CD4-positive, alpha-beta memory T cell (primary cell): ENCODE measurements at regions of chr16 and their contacts with region 1.

Region 1: DNA sequence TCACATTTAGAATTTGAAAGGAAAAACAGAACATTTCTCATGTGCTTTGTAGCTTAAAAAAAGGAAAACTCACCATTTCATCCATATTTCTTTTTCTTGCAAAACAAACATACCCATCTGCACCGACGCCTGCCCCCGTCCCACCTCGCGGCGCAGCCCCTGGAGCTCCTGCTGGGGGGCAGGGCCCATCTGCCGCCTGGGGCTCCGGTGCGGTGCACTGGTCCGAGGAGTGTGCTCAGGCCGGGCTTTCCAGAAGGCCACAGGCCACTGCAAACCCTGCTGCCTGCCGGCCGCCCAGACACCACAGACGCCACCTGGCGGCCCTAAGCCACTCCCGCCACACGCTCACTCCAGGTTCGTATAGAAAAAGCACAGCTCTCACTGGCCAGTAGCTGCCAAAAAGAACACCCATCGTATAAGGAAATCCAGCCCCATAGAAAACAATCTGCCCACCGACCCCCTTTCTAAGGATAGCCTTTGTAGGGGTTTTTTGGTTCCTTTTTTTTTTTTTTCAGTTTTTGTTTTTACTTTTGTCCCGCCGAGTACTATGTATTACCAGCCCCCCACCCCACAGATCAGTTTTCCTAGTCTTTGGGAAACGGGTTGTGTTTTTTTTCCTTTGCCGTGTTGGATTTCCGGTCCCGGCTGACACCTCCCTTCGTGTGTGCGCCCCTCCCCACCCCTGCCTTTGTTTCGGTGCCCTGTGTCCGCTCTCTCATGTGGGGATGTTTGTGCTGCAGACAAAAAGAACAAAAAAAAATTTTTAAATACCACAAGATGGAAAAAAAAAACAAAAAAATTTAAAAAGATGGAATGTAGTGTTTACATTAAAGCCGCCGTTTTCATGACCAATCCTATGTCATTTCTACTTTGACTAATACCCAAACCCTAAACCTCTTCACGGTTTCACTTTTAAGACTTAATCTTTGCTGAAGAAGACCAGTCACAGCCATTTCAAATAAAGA is 68.8 kb downstream of the AMFR start:
- DNase-seq: peak in 4 of 5 donors; percentile 43 to 50 (median 46)
- H3K4me3 ChIP-seq: peak overlapping the region; percentile 20 to 74
- H3K4me3 Mint-ChIP-seq: peak overlapping the region; percentile 85 to 94 (median 92)
- H3K27ac ChIP-seq: peak overlapping the region; percentile 54
- H3K27ac Mint-ChIP-seq: peak overlapping the region; percentile 83 to 96 (median 91)
- H3K4me1 ChIP-seq: peaks cover 18% of the 10 kb centered on the region
- H3K4me1 Mint-ChIP-seq: peaks cover 6 to 37% (median 16%) of the 10 kb centered on the region in 4 donors
- H3K27me3 ChIP-seq: no peaks in the 10 kb centered on the region
- H3K27me3 Mint-ChIP-seq: no peaks in the 10 kb centered on the region

Region 2: DNA sequence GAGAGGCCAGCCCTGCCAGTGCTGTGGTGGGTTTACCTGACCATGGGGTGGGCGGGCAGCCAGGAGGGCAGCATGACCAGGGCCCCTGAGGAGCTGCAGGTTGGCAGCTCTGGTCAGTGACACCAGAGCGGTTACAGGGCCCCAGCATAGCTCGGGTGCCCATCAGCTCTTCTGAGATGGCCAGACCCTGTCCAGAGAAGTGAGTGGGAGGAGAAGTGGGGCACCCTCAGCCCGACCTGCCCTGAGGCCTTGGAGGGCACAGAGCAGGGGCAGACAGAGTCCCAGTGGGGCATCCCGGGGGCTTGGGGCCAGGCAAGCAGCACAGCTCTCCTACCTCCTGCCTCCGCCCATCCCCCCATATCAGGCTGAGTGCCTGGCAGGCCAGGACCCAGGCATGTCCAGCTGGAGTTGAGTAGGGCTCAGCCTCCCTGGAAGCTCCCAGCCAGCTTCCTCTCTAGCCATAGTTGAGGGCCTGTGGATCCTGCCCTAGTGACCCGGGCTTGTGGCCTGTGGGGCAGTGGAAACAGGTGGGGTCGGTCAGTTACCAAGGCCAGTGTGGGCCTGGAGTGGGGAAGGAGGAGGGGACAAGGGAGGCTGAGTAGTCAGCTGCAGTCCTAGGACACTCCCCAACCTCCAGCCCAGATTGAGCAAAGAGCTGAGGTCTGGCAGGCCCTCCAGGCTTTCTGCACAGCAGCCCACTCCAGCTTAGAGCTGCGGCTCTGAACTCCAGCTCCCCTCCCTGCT is 14.7 kb before region 1 on chr16:
- CTCF ChIA-PET with region 1: interaction called, 11 read pairs
- POLR2A ChIA-PET with region 1: no interaction called
- intact Hi-C with region 1: no loop called
- DNase-seq: no peak
- H3K4me3 ChIP-seq: no peak overlapping the region
- H3K4me3 Mint-ChIP-seq: no peak overlapping the region
- H3K27ac ChIP-seq: no peak overlapping the region
- H3K27ac Mint-ChIP-seq: no peak overlapping the region
- H3K4me1 ChIP-seq: no peaks in the 10 kb centered on the region
- H3K4me1 Mint-ChIP-seq: peaks cover 0 to 2% (median 0%) of the 10 kb centered on the region in 4 donors
- H3K27me3 ChIP-seq: no peaks in the 10 kb centered on the region
- H3K27me3 Mint-ChIP-seq: no peaks in the 10 kb centered on the region